ENCODE measurements at regions of chrX and their contacts with region 1.

Region 1: GRCh38 chrX:132219343-132219768 is at the start of gene RAP2C:
- DNase-seq: peak; percentile 25
- H3K4me3 Mint-ChIP-seq: peak within 1 kb of the TSS; percentile 91
- H3K27ac Mint-ChIP-seq: peak within 1 kb of the TSS; percentile 95
- H3K4me1 Mint-ChIP-seq: peaks cover 26% of the 10 kb centered on the region
- H3K27me3 Mint-ChIP-seq: no peaks in the 10 kb centered on the region
- total RNA-seq, gene RAP2C: 33.8 and 37.6 TPM in 2 replicates

Region 2: GRCh38 chrX:131830400-131831184 is 388.8 kb before region 1 on chrX:
- intact Hi-C with region 1: loop called (anchors 1 kb)
- DNase-seq: peak; percentile 40
- H3K4me3 Mint-ChIP-seq: peak overlapping the region; percentile 95
- H3K27ac Mint-ChIP-seq: peak overlapping the region; percentile 91
- H3K4me1 Mint-ChIP-seq: peaks cover 34% of the 10 kb centered on the region
- H3K27me3 Mint-ChIP-seq: no peaks in the 10 kb centered on the region

Region 3: DNA sequence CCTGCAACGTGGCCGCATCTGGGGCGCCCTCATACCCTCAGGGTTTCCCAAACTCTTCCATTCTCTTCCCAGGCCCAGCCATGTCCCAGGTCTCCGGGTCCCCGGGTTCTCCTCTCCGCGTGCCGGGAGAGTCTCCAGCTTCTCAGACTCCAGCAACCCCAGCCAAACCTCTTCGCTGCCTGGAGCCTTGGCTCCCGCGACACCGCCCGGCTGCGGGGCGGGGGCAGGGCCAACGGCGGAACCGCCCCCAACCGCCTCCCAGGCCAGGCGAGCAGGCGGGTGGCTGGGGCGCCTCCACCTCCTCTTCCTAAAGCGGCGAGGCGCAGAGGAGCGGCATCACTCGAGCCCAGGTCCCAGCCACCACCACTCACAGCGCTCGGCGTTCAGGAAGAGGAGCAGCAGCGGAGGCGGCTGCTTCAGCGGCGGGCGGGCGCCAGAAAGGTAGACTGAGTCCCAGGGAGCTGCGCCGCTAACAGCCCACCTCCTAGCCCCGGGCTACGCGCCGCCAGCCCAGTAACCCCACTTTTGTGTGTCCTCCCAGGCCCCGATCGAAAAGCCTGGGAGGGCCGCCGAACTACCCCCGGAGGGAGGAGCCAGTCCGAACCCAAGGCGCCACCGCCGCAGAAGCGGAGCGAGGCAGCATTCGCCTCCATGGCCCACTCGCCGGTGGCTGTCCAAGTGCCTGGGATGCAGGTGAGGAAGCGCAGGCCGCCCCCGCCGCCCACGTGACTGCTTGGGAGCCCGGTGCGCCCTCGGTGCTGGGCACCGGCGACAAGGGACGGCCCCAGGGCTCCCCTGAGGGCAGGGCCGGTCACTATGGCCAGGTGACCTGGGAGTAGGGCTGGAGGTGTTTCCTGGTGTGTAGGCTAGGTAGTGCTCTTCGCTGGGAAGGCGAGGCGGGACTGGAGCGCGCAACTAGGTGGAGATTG is 196.1 kb before region 1 on chrX and contains the start of gene STK26:
- intact Hi-C with region 1: loop called (anchors 1 kb)
- DNase-seq: peak; percentile 75
- H3K4me3 Mint-ChIP-seq: peak within 1 kb of the TSS; percentile 94
- H3K27ac Mint-ChIP-seq: peak within 1 kb of the TSS; percentile 92
- H3K4me1 Mint-ChIP-seq: peaks cover 30% of the 10 kb centered on the region
- H3K27me3 Mint-ChIP-seq: no peaks in the 10 kb centered on the region
- total RNA-seq, gene STK26: 57.1 and 59.3 TPM in 2 replicates

Region 4: DNA sequence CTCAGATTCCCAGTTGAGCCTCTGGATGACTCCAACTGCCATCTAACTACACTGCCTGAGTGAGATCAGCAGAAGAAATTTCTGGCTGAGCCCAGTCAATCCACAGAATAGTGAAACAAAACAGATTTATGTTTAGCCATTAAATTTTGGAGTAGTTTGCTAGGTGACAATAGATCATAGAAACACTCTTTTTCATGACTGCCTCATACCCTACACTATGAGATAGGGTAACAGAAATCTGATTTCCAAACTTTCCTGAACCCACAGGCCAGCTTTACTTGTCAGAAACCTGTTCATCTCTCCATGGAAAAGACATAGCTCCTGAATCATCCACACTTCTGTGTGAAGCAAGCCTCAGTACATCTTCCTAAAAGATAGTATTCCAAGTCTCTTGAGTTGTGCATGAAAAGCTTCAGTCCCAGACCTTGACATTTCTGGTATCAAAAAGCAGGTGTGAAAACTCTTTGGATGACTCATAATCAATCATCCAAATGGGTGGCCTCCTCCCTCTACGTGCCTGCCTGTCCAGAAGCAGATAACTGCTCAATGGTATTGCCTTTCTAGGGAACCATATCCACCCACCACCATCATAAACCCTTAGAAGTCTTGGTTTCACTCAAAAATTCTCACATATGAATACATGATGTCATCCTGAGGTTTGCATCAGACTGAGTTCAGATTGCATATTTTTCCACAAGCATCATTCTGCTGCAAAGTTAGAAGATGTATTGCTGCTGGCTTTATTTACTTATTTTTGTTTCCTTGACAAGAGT is 47.4 kb after region 1 on chrX:
- intact Hi-C with region 1: loop called (anchors 2 kb)
- DNase-seq: no peak
- H3K4me3 Mint-ChIP-seq: no peak overlapping the region
- H3K27ac Mint-ChIP-seq: no peak overlapping the region
- H3K4me1 Mint-ChIP-seq: peaks cover 8% of the 10 kb centered on the region
- H3K27me3 Mint-ChIP-seq: no peaks in the 10 kb centered on the region

Region 5: GRCh38 chrX:132622130-132622529 is 402.8 kb after region 1 on chrX:
- intact Hi-C with region 1: loop called (anchors 5 kb)
- DNase-seq: peak; percentile 1
- H3K4me3 Mint-ChIP-seq: no peak overlapping the region
- H3K27ac Mint-ChIP-seq: no peak overlapping the region
- H3K4me1 Mint-ChIP-seq: peaks cover 5% of the 10 kb centered on the region
- H3K27me3 Mint-ChIP-seq: no peaks in the 10 kb centered on the region